ENCODE measurements at regions of chr22 and their contacts with region 1.

Region 1: DNA sequence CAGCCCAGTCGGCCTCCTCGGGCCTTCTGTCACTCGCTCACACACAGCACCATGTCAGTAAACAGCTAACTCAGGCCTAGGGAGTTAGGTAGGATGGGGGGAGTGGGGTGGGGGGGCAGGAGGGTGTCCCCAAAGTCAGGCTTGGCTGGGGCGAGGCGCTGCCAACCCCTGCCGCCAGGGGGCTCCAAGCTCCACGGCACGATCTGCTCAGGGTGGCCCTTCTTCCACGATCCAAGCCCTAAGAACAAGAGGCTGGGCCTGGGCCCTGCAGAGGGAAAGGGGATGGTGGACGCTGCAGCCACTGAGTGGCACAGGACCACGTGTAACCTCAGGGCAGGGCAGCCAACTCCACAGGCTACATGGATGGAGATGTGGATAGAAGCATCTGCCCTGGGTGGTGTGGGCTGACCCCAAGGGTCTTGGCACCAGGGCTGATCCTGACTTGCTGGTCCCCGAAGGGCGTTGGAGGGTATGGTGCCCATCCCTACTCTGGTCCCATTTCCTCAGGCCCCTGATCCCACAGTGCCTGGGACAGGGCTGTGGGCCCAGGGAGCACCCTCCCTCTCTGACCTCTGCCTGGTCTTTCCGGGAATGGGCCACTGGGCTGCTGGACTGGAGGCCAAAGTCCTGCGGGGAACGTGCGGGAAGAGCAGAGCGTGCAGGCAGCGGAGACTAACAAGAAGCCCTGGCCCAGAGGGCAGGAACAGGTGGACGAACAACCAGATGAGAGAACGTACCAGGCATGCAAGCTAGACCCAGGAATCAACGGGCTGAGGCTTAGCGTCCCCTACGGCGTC is 29.1 kb upstream of the TXNRD2 start:
- DNase-seq: peak; percentile 80
- ATAC-seq: peak; percentile 76
- H3K4me3 ChIP-seq: no peak overlapping the region
- H3K4me3 Mint-ChIP-seq: no peak overlapping the region
- H3K27ac ChIP-seq: no peak overlapping the region
- H3K27ac Mint-ChIP-seq: no peak overlapping the region
- H3K4me1 ChIP-seq: peaks cover 0 to 4% of the 10 kb centered on the region in 2 donors
- H3K4me1 Mint-ChIP-seq: peaks cover 14% of the 10 kb centered on the region
- H3K27me3 ChIP-seq: no peaks in the 10 kb centered on the region
- H3K27me3 Mint-ChIP-seq: no peaks in the 10 kb centered on the region
- CTCF ChIP-seq: peak; percentile 98

Region 2: GRCh38 chr22:20016734-20017621 is 46.3 kb after region 1 on chr22 and contains the start of gene ARVCF:
- CTCF ChIA-PET with region 1: interaction called, 65 read pairs
- POLR2A ChIA-PET with region 1: interaction called, 3 read pairs
- intact Hi-C with region 1: no loop called
- DNase-seq: peak; percentile 97
- ATAC-seq: peak; percentile 69
- H3K4me3 ChIP-seq: peak within 1 kb of the TSS; percentile 22 to 79 (median 76)
- H3K4me3 Mint-ChIP-seq: peak within 1 kb of the TSS; percentile 91
- H3K27ac ChIP-seq: no peak within 1 kb of the TSS
- H3K27ac Mint-ChIP-seq: peak within 1 kb of the TSS; percentile 61
- H3K4me1 ChIP-seq: peaks cover 18 to 22% of the 10 kb centered on the region in 2 donors
- H3K4me1 Mint-ChIP-seq: peaks cover 25% of the 10 kb centered on the region
- H3K27me3 ChIP-seq: peaks cover 0 to 25% (median 4%) of the 10 kb centered on the region in 4 experiments
- H3K27me3 Mint-ChIP-seq: no peaks in the 10 kb centered on the region
- CTCF ChIP-seq: peak; percentile 39
- total RNA-seq, gene ARVCF: 6.7 and 8.4 TPM in 2 replicates

Region 3: DNA sequence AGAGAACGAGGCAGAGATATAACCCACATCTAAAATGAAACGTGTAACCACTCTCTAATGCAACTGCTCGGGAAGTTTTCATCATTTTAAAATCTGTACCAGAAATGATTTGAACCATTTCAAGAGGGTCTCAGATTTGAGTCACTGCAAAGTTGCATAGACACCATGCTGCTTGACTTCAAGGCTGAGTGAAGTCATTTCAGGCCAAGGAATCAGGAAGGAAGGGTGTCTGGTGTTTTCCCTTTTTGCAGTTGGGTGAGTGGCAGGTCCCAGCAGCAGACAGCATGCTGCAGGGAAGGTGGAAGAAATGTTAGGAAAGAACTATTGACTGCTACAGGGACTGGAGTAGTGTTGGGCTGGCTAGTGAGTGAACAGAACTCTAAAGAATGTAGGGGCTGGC is 66.7 kb after region 1 on chr22:
- CTCF ChIA-PET with region 1: interaction called, 3 read pairs
- POLR2A ChIA-PET with region 1: no interaction called
- intact Hi-C with region 1: loop called (anchors 2 kb)
- DNase-seq: no peak
- ATAC-seq: no peak
- H3K4me3 ChIP-seq: no peak overlapping the region
- H3K4me3 Mint-ChIP-seq: peak overlapping the region; percentile 55
- H3K27ac ChIP-seq: no peak overlapping the region
- H3K27ac Mint-ChIP-seq: peak overlapping the region; percentile 96
- H3K4me1 ChIP-seq: peaks cover 14 to 45% of the 10 kb centered on the region in 2 donors
- H3K4me1 Mint-ChIP-seq: peaks cover 56% of the 10 kb centered on the region
- H3K27me3 ChIP-seq: no peaks in the 10 kb centered on the region
- H3K27me3 Mint-ChIP-seq: no peaks in the 10 kb centered on the region
- CTCF ChIP-seq: no peak

Region 4: GRCh38 chr22:20130739-20131596 is 160.3 kb after region 1 on chr22:
- CTCF ChIA-PET with region 1: interaction called, 10 read pairs
- POLR2A ChIA-PET with region 1: no interaction called
- intact Hi-C with region 1: loop called (anchors 5 kb)
- DNase-seq: peak; percentile 86
- ATAC-seq: peak; percentile 85
- H3K4me3 ChIP-seq: peak overlapping the region; percentile 6 to 97 (median 87)
- H3K4me3 Mint-ChIP-seq: peak overlapping the region; percentile 70
- H3K27ac ChIP-seq: peak overlapping the region; percentile 54 to 79
- H3K27ac Mint-ChIP-seq: peak overlapping the region; percentile 80
- H3K4me1 ChIP-seq: peaks cover 14 to 37% of the 10 kb centered on the region in 2 donors
- H3K4me1 Mint-ChIP-seq: peaks cover 24% of the 10 kb centered on the region
- H3K27me3 ChIP-seq: no peaks in the 10 kb centered on the region
- H3K27me3 Mint-ChIP-seq: no peaks in the 10 kb centered on the region
- CTCF ChIP-seq: no peak